ENCODE measurements at regions of chr17 and their contacts with region 1.

Region 1: DNA sequence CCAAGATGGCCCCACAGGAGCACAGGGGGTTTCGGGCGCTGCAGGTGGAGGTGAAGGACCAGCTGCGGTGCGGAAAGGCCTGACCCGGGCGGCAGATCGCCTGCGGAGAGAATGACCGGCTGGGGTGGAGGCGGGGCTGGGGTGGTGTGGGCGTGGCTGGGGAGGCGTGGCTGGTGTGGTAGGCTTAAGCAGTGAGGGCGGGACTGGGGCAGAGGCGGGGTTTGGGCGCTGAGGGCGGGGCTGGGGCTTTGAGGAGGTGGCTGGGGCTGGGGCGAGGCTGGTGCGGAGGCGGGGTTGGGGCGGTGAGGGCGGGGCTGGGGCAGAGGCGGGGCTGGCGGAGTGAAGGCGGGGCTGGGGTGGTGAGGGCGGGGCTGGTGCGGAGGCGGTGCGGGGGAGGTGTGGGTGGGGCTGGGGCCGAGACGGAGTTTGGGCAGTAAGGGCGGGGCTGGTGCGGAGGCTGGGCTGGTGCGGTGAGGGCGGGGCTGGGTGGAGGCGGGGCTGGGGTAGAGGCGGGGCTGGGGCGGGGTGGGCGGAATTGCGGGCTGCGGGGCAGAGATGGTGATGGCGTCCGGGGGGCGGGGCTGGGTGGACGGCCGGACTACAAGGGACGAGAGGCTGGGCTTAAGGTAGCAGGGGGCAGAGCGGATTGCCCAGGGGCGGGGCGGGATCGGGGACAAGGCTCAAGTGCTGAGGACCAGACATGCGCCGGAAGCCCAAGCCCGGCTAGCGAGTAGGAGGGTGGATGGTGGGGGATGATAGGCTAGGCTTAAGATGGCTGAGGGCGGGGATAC is 9.9 kb upstream of the GSDMA start:
- DNase-seq: peak; percentile 100
- H3K4me3 Mint-ChIP-seq: peak overlapping the region; percentile 58
- H3K27ac Mint-ChIP-seq: peak overlapping the region; percentile 18
- H3K4me1 Mint-ChIP-seq: peaks cover 42% of the 10 kb centered on the region
- H3K27me3 Mint-ChIP-seq: peaks cover 15% of the 10 kb centered on the region
- CTCF ChIP-seq: no peak

Region 2: DNA sequence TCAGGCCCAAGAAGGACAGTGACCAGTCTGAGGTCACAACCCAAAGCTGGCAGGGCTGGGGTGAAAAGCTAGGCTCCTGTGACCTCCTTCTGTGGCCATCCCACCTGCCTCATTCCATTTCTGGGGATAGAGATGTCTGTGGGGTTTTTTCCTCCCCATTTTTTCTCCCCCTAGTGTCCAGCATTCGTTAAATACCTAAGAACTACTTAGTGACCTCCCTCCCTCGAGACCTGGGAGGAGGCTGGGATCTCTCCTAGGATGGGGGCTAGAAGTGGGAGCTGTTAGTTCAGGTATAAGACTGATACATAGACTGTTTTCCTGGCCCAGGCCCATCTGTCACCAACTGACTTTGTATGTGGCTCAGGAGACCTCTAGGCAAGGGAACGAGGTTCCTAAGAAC is 706.6 kb before region 1 on chr17:
- CTCF ChIA-PET with region 1: no interaction called
- intact Hi-C with region 1: no loop called
- DNase-seq: no peak
- H3K4me3 Mint-ChIP-seq: no peak overlapping the region
- H3K27ac Mint-ChIP-seq: no peak overlapping the region
- H3K4me1 Mint-ChIP-seq: peaks cover 13% of the 10 kb centered on the region
- H3K27me3 Mint-ChIP-seq: peaks cover 26% of the 10 kb centered on the region
- CTCF ChIP-seq: peak; percentile 78

Region 3: DNA sequence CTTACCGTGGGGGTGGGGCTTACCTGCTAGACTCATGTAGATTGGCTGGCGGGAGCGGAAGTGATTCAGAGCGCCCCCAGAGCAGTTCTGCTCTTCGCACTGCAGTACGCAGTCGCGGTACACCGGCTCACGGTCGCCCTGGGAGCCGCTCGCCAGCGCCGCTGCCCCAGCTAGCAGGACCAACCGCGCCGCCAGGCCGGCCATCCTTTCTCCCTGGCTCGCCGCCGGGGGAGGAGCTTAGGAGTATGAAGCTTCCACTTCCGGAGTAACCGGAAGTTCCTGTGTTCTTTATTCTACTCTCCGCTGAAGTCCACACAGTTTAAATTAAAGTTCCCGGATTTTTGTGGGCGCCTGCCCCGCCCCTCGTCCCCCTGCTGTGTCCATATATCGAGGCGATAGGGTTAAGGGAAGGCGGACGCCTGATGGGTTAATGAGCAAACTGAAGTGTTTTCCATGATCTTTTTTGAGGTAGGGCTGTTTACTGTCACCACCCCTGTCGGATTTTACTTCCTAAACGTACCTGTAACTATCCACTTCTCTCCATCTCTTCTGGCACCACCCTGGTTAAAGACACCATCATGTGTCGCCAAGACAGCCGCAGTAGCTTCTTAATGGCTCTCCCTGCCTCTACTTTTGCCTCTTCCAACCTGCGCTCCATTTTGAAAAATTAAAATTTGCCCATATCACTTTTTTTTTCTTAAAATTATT is 264.9 kb before region 1 on chr17 and contains the start of gene PGAP3:
- CTCF ChIA-PET with region 1: interaction called, 8,195 read pairs
- intact Hi-C with region 1: loop called (anchors 1 kb)
- DNase-seq: peak; percentile 100
- H3K4me3 Mint-ChIP-seq: peak within 1 kb of the TSS; percentile 64
- H3K27ac Mint-ChIP-seq: peak within 1 kb of the TSS; percentile 63
- H3K4me1 Mint-ChIP-seq: peaks cover 27% of the 10 kb centered on the region
- H3K27me3 Mint-ChIP-seq: no peaks in the 10 kb centered on the region
- CTCF ChIP-seq: no peak
- total RNA-seq, gene PGAP3: 1,186 and 1,276 TPM in 2 replicates

Region 4: DNA sequence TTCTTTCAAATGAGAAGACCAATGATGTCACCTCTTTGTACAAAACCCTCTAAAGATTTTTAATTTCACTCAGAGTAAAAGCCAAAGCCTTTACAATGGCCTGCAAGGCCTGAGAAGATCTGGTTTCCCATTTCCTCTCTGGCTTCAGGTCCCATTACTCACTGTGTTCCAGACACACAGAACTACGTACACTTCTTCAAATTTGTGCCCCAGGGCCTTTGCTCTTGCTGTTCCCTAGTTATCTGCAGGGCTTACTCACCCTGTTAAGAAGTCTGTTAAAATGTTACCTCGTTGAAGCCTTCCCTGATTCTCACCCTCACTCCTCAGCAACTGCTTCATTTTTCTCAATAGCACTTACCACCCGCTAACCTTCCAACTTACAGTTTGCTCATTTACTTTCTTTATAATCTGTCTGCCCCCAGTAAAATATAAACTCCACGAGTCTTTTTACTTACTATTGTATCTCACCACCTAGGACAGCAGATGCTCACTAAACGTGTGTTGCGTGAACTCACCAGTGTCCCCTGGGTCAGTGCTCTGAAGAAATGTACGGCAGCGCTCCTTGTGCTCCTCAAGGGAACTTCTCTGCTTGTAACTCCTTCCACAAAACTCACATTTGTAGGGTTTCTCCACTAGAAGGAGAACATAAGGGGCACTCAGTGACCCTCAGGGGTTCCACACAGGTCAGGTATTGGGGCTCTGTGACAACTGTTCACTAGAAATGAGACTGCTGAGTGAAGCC is 165.0 kb before region 1 on chr17:
- CTCF ChIA-PET with region 1: interaction called, 978 read pairs
- intact Hi-C with region 1: no loop called
- DNase-seq: peak; percentile 80
- H3K4me3 Mint-ChIP-seq: no peak overlapping the region
- H3K27ac Mint-ChIP-seq: no peak overlapping the region
- H3K4me1 Mint-ChIP-seq: peaks cover 29% of the 10 kb centered on the region
- H3K27me3 Mint-ChIP-seq: no peaks in the 10 kb centered on the region
- CTCF ChIP-seq: no peak

Region 5: DNA sequence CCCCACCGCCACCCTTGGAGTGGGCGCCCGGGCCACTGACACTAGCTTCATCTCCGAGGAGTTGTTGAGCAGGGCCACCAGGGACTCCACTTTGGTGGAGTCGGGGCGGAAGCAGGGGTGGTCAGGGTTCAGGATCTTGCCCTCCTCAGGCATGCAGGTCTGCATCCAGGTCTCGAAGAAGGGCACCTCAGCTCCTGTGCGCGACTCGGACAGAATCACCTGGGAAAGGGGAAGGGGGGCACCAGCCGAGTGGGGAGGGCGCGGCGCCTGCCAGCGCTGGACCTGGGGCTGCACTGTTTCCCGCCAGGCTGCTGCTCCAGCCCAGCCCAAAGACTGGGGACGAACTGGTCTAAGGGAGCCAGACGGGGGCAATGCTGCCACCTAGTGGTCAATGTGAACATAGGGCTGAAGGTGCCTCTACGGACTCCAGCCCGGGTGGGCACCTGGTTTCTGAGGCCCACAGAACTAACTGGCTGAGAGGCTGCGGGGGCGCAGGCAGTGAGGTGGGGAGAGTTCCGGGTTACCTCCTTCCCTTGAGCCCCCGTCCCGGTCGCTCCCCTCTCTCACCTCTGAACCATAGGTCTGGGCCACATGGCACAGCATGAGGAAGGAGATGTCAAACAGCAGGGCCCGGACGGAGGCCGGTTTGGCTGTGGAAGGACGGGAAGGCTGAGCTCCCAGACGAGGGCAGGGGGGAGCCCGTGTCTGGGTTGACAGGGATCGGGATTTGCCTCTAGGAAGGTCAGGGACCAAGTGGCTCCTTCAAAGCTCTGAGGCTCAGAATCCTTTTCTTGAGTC is 74.1 kb after region 1 on chr17:
- CTCF ChIA-PET with region 1: interaction called, 30 read pairs
- intact Hi-C with region 1: no loop called
- DNase-seq: peak; percentile 100
- H3K4me3 Mint-ChIP-seq: no peak overlapping the region
- H3K27ac Mint-ChIP-seq: no peak overlapping the region
- H3K4me1 Mint-ChIP-seq: peaks cover 30% of the 10 kb centered on the region
- H3K27me3 Mint-ChIP-seq: no peaks in the 10 kb centered on the region
- CTCF ChIP-seq: no peak

Region 6: DNA sequence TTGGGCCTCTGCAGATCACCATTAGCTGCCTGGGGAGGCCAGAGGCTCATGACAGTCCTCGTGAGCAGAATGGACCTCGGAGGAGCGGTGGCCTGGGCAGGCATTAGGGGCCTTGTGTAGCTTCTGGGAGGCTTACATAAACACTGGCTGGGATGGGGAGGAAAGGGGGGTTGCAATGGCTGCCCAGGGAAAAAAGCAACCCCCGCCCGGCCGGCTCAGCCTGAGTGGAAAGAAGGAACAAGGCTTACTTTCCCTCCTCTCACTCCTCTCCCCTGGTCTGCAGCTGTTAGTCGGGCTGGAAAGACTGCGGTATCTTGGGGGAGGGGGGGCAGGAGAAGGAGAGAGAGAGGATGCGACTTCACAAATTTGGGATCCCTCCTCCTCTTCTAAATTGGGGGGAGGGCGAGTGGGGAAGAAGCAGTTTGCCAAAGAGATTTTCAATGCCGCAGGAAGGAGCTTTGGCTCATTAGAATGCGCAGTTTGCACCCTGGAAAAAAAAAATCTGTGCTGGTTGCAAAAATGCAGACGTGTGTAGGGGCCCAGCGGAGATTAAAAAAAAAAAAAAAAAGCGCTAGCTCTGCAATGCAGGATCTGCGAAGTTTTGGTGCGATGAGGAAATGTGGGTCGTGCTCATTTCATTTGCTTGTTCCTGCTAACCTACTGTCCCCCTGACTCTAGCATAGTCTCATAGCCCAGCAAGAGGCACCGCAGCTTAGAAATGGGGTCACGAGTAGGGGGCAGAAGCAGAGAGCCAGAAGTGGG is 154.1 kb after region 1 on chr17:
- CTCF ChIA-PET with region 1: no interaction called
- intact Hi-C with region 1: no loop called
- DNase-seq: no peak
- H3K4me3 Mint-ChIP-seq: no peak overlapping the region
- H3K27ac Mint-ChIP-seq: no peak overlapping the region
- H3K4me1 Mint-ChIP-seq: peaks cover 92% of the 10 kb centered on the region
- H3K27me3 Mint-ChIP-seq: no peaks in the 10 kb centered on the region
- CTCF ChIP-seq: no peak

Region 7: GRCh38 chr17:40443583-40444327 is 490.9 kb after region 1 on chr17:
- CTCF ChIA-PET with region 1: interaction called, 10 read pairs
- intact Hi-C with region 1: no loop called
- DNase-seq: peak; percentile 100
- H3K4me3 Mint-ChIP-seq: peak overlapping the region; percentile 1
- H3K27ac Mint-ChIP-seq: no peak overlapping the region
- H3K4me1 Mint-ChIP-seq: peaks cover 35% of the 10 kb centered on the region
- H3K27me3 Mint-ChIP-seq: peaks cover 37% of the 10 kb centered on the region
- CTCF ChIP-seq: no peak